Psoas muscle (tissue), 8 donors: ENCODE measurements at regions of chr2 and their contacts with region 1.

Region 1: GRCh38 chr2:147331790-147332419 is 512.9 kb upstream of the ACVR2A start:
- DNase-seq: no peak
- ATAC-seq: peak in 1 of 4 donors; percentile 48
- H3K4me3 ChIP-seq: no peak overlapping the region
- H3K27ac ChIP-seq: no peak overlapping the region
- H3K4me1 ChIP-seq: no peaks in the 10 kb centered on the region
- H3K27me3 ChIP-seq: no peaks in the 10 kb centered on the region
- CTCF ChIP-seq: peak; percentile 60

Region 2: GRCh38 chr2:146734042-146734820 is 597.7 kb before region 1 on chr2:
- intact Hi-C with region 1: loop called in 1 of 2 experiments (anchors 10 kb)
- DNase-seq: no peak
- ATAC-seq: peak; percentile 71 to 81 (median 80)
- H3K4me3 ChIP-seq: no peak overlapping the region
- H3K27ac ChIP-seq: no peak overlapping the region
- H3K4me1 ChIP-seq: peaks cover 6% of the 10 kb centered on the region
- H3K27me3 ChIP-seq: no peaks in the 10 kb centered on the region
- CTCF ChIP-seq: peak; percentile 53

Region 3: GRCh38 chr2:147045113-147045512 is 286.8 kb before region 1 on chr2:
- intact Hi-C with region 1: loop called in 1 of 2 experiments (anchors 10 kb)
- DNase-seq: peak; percentile 22 to 55
- ATAC-seq: no peak
- H3K4me3 ChIP-seq: no peak overlapping the region
- H3K27ac ChIP-seq: no peak overlapping the region
- H3K4me1 ChIP-seq: no peaks in the 10 kb centered on the region
- H3K27me3 ChIP-seq: no peaks in the 10 kb centered on the region
- CTCF ChIP-seq: peak; percentile 64

Region 4: DNA sequence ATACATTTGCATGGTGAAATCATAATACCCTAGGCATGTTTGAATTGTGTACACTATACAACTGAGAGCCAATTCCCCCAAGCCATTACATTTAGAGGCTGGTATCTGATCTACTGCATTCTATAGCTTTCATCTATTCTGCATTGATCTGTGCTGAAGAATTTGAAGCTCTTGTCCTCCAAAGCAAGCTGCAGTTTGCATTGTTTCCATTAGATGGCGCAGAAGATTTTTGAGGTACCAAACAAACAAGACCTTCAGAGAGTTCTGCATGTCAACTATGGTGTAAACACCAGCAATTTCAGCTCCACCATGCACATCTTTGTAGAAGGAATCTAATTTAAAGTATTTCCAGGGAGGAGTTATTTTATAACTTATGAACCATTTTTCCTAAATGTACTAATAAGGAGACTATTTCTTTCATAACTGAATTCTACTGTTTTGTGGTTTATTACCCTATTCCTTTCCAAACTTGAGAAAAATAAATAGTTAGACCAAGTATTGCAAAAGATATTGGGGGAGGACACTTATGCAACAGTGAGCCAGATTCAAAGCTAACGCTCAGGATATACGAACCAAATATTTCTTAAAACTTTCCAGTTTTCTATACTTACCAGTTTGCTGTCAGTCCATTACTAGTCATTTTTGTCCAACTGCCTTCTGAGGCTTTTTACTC is 248.9 kb before region 1 on chr2:
- intact Hi-C with region 1: loop called (anchors 2 to 5 kb)
- DNase-seq: no peak
- ATAC-seq: peak; percentile 48 to 82 (median 64)
- H3K4me3 ChIP-seq: no peak overlapping the region
- H3K27ac ChIP-seq: no peak overlapping the region
- H3K4me1 ChIP-seq: no peaks in the 10 kb centered on the region
- H3K27me3 ChIP-seq: no peaks in the 10 kb centered on the region
- CTCF ChIP-seq: peak; percentile 95

Region 5: GRCh38 chr2:147273106-147273505 is 58.8 kb before region 1 on chr2:
- intact Hi-C with region 1: no loop called
- DNase-seq: no peak
- ATAC-seq: no peak
- H3K4me3 ChIP-seq: no peak overlapping the region
- H3K27ac ChIP-seq: no peak overlapping the region
- H3K4me1 ChIP-seq: no peaks in the 10 kb centered on the region
- H3K27me3 ChIP-seq: no peaks in the 10 kb centered on the region
- CTCF ChIP-seq: no peak